Activated CD4-positive, alpha-beta T cell treated with anti-CD3 and anti-CD28 coated beads, Interleukin-2, amount 10 ng/mL, durations not matched to agents 7 days and 5 days (primary cell): ENCODE measurements at regions of chr17 and their contacts with region 1.

Region 1: DNA sequence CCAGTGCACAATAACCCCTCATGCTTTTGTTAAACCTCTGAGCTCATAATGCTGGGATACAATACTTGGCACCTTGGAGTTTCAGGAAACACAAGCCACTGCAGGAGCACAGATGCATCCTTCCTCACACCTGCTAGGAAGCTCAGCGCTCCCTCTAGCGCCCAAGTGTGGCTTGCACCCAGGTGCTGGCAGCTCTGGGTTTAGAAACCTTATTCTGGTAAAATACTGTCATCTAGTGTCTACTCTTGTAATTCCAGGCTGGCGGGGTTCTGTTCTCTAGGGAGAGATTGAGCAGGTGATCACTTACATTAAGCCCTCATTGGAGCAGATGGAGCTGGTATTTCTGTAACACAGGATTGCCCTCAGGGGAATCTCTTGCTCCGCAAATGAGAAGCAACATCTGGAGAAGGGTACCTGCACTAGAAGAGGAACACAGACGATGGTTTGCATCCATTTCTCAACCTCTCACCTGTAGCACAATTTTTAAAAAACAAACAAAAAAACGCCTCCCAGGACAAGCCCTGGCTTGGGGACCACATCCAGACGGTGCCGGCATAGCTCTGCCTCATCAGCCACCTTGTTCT is 1.5 kb downstream of the CCL1 start:
- DNase-seq: peak; percentile 88
- H3K4me3 Mint-ChIP-seq: no peak overlapping the region
- H3K27ac Mint-ChIP-seq: no peak overlapping the region
- H3K4me1 Mint-ChIP-seq: peaks cover 42% of the 10 kb centered on the region
- H3K27me3 Mint-ChIP-seq: peaks cover 14% of the 10 kb centered on the region

Region 2: GRCh38 chr17:34171245-34171818 is 190.2 kb before region 1 on chr17:
- CTCF ChIA-PET with region 1: interaction called, 17 read pairs
- POLR2A ChIA-PET with region 1: no interaction called
- DNase-seq: peak; percentile 70
- H3K4me3 Mint-ChIP-seq: no peak overlapping the region
- H3K27ac Mint-ChIP-seq: no peak overlapping the region
- H3K4me1 Mint-ChIP-seq: peaks cover 4% of the 10 kb centered on the region
- H3K27me3 Mint-ChIP-seq: peaks cover 12% of the 10 kb centered on the region

Region 3: GRCh38 chr17:34199932-34200534 is 161.5 kb before region 1 on chr17:
- CTCF ChIA-PET with region 1: interaction called, 43 read pairs
- POLR2A ChIA-PET with region 1: interaction called, 5 read pairs
- DNase-seq: peak; percentile 86
- H3K4me3 Mint-ChIP-seq: no peak overlapping the region
- H3K27ac Mint-ChIP-seq: no peak overlapping the region
- H3K4me1 Mint-ChIP-seq: peaks cover 12% of the 10 kb centered on the region
- H3K27me3 Mint-ChIP-seq: peaks cover 39% of the 10 kb centered on the region

Region 4: DNA sequence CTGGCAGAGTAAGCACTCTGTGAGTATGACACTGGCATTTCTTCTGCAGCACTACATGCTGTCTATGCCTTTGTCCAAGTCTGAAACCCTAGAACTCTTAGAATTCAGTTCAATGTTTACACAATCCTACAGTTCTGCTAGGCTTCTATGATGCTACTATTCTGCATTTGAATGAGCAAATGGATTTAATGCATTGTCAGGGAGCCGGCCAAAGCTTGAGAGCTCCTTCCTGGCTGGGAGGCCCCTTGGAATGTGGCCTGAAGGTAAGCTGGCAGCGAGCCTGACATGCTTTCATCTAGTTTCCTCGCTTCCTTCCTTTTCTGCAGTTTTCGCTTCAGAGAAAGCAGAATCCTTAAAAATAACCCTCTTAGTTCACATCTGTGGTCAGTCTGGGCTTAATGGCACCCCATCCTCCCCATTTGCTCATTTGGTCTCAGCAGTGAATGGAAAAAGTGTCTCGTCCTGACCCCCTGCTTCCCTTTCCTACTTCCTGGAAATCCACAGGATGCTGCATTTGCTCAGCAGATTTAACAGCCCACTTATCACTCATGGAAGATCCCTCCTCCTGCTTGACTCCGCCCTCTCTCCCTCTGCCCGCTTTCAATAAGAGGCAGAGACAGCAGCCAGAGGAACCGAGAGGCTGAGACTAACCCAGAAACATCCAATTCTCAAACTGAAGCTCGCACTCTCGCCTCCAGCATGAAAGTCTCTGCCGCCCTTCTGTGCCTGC is 106.8 kb before region 1 on chr17 and contains the start of gene CCL2:
- CTCF ChIA-PET with region 1: no interaction called
- POLR2A ChIA-PET with region 1: no interaction called
- DNase-seq: no peak
- H3K4me3 Mint-ChIP-seq: no peak within 1 kb of the TSS
- H3K27ac Mint-ChIP-seq: no peak within 1 kb of the TSS
- H3K4me1 Mint-ChIP-seq: peaks cover 5% of the 10 kb centered on the region
- H3K27me3 Mint-ChIP-seq: peaks cover 37% of the 10 kb centered on the region
- total RNA-seq, gene CCL2: not detected